ENCODE measurements at regions of chr19 and their contacts with region 1.

Region 1: DNA sequence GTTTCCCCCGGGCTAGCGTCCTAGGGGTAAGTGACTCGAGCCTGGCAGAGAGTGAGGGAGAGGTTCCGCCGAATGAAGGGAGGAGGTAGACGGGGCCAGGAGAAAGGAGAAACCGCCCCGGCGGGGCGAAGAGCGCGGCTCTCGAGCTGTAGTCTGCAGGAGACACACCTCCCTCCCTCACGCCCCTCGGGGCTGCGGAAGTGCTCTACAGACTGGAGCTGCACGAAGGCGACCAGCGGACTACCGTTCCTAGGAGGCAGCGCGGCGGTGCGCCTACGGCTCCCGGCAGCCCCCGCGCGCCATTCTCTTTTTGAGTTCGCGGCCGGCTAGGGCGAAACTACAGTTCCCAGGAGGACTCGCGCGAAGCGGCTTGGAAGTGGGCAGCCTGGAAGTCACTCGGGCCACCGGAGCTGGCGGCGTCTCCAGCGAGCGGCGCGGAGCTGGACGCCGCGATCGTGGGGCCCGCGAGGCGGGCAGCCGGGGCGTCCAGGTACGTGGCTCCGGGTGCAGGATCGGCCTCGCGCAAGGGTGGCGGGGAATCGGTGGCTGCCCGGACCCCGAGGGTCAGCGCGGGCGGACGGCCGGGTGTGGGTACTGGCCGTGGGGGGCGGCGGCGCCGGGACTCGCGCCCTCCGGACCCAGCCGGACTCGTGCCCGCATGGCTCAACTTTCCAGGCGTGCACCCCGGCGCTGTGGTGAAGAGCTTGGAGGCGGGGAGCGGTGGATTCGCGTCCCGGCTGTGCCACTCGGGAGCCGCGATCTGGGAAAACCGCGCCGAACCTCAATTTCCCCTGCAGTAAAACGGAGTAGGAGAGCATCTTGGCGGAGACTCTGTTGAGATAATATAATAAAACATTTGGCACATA is at the start of gene SIPA1L3:
- DNase-seq: peak; percentile 95
- H3K4me3 ChIP-seq: peak within 1 kb of the TSS; percentile 61 to 94 (median 84)
- H3K27ac ChIP-seq: peak within 1 kb of the TSS; percentile 44
- H3K4me1 ChIP-seq: peaks cover 15% of the 10 kb centered on the region
- H3K27me3 ChIP-seq: no peaks in the 10 kb centered on the region
- CTCF ChIP-seq: no peak
- total RNA-seq, gene SIPA1L3: 29.3 to 38.5 TPM

Region 2: DNA sequence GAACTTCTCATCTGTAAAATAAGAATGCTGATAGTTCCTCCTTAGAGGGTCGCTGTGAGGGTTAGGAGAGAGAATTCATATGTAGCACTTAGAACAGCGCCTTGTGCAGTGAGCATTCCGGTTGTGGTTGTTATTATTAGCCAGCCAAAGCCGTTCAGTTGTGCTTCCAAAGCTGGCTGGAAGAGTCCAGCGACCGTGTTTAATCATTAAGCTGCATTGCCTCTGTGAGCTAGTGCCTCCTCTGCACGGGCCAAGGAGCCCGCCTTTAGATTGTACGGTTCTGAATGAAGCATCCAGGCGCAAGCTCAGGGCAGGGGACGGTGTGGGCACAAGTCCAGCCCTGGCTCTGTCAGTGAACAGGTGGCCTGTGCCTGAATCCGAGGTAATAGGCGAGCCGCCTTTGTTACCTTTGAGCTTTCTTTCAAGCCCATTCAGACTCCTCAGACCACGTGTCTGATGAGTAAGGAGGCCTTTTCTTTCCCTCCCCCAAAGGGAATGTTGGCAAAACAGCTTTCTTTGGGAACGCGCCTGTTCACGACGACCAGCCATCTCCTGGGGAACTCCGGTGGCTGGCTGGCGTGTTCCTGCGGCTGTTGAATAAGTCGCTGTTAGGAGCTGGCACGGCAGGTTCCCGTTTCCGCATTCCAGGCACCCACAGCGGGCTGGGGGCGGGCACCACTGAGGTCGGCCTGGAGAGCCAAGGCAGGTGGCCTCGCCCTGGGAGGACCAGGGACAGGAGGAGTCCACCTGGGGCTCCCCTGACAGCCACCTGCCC is 25.0 kb after region 1 on chr19:
- CTCF ChIA-PET with region 1: no interaction called
- dilution Hi-C with region 1: no loop called
- in situ Hi-C with region 1: no loop called
- intact Hi-C with region 1: loop called (anchors 2 kb)
- DNase-seq: peak; percentile 98
- H3K4me3 ChIP-seq: peak overlapping the region; percentile 3 to 33 (median 27)
- H3K27ac ChIP-seq: peak overlapping the region; percentile 72
- H3K4me1 ChIP-seq: peaks cover 48% of the 10 kb centered on the region
- H3K27me3 ChIP-seq: no peaks in the 10 kb centered on the region
- CTCF ChIP-seq: peak in 1 of 2 donors; percentile 25

Region 3: GRCh38 chr19:37991841-37992248 is 84.7 kb after region 1 on chr19:
- CTCF ChIA-PET with region 1: interaction called, 12 read pairs
- dilution Hi-C with region 1: no loop called
- in situ Hi-C with region 1: loop called in 1 of 2 experiments (anchors 10 kb)
- intact Hi-C with region 1: loop called (anchors 1 kb)
- DNase-seq: peak; percentile 57
- H3K4me3 ChIP-seq: no peak overlapping the region
- H3K27ac ChIP-seq: peak overlapping the region; percentile 47
- H3K4me1 ChIP-seq: peaks cover 27% of the 10 kb centered on the region
- H3K27me3 ChIP-seq: no peaks in the 10 kb centered on the region
- CTCF ChIP-seq: no peak

Region 4: GRCh38 chr19:38049105-38049649 is 142.1 kb after region 1 on chr19:
- CTCF ChIA-PET with region 1: interaction called, 3 read pairs
- dilution Hi-C with region 1: no loop called
- in situ Hi-C with region 1: no loop called
- intact Hi-C with region 1: loop called (anchors 1 kb)
- DNase-seq: no peak
- H3K4me3 ChIP-seq: no peak overlapping the region
- H3K27ac ChIP-seq: no peak overlapping the region
- H3K4me1 ChIP-seq: no peaks in the 10 kb centered on the region
- H3K27me3 ChIP-seq: no peaks in the 10 kb centered on the region
- CTCF ChIP-seq: no peak

Region 5: DNA sequence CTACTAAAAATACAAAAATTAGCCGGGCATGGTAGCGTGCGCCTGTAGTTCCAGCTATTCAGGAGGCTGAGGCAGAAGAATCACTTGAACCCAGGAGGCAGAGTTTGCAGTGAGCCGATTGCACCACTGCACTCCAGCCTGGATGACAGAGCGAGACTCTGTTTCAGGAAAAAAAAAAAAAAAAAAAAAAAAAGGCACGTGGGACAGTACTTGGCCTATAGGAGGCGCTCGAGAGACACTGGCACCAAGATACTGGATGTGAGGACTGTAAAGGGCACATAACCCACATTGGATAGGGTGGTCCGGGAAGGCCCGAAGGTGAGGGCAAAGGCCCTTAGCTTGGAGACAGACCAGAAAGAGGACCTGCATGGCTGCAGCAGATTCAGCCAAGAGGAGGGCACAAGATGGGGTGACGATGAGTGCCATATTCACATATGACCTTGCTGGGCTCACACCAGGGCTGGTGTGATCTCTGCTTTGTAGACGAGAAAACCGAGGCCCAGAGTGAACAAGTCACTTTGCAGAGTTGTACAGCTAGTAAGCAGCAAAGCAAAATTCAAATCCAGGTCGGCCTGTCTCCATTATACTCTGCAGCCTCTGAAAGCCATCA is 227.5 kb after region 1 on chr19:
- CTCF ChIA-PET with region 1: interaction called, 3 read pairs
- dilution Hi-C with region 1: no loop called
- in situ Hi-C with region 1: no loop called
- intact Hi-C with region 1: loop called (anchors 2 kb)
- DNase-seq: peak; percentile 39
- H3K4me3 ChIP-seq: no peak overlapping the region
- H3K27ac ChIP-seq: no peak overlapping the region
- H3K4me1 ChIP-seq: peaks cover 17% of the 10 kb centered on the region
- H3K27me3 ChIP-seq: no peaks in the 10 kb centered on the region
- CTCF ChIP-seq: peak; percentile 53 to 77

Region 6: DNA sequence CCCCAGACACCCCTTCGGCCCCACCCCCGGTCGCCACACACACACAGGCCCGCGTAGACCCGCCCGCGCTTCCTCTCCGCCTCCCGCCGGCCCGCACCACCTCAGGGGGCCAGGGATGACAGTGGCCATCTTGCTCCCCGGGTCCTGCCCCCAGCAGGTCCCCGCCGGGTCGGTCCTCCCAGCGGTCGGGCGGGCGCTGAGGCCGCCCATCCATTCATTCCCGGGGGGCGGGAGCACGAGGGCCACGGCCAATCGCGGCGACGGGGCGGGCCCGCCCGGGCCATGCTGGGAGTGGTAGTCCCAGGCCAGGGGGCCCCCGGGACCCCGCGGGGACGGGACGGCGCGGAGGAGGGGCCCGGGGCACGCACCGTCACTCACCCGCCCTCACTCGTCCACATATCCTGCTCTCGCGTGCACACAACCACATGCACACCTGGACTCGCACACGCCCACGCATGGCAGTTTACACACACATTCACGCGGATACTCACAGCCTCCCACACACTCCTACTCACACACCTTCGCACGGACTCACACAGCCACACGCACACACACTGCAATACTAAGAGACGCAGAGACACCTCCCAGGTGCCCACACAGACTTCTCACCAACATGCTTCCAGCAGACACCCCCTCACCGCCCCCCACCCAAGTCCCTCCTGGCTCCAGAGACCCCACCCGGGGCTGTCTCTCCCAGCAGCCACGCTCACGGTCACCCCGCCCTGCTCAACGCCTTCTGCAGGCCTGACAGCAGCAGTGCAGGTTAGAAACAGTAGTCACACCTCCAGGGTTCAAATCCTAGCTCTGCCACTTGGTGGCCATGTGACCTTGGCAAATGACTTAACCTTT is 317.1 kb after region 1 on chr19 and contains the start of gene DPF1:
- CTCF ChIA-PET with region 1: no interaction called
- dilution Hi-C with region 1: no loop called
- in situ Hi-C with region 1: no loop called
- intact Hi-C with region 1: loop called (anchors 1 kb)
- DNase-seq: peak; percentile 79
- H3K4me3 ChIP-seq: peak within 1 kb of the TSS; percentile 42 to 62 (median 59)
- H3K27ac ChIP-seq: no peak within 1 kb of the TSS
- H3K4me1 ChIP-seq: peaks cover 21% of the 10 kb centered on the region
- H3K27me3 ChIP-seq: peaks cover 12% of the 10 kb centered on the region
- CTCF ChIP-seq: peak; percentile 34 to 43
- total RNA-seq, gene DPF1: 3.0 to 6.2 TPM

Measured in mammary epithelial cell (primary cell).